Mammary epithelial cell (primary cell): ENCODE measurements at regions of chr1 and their contacts with region 1.

Region 1: DNA sequence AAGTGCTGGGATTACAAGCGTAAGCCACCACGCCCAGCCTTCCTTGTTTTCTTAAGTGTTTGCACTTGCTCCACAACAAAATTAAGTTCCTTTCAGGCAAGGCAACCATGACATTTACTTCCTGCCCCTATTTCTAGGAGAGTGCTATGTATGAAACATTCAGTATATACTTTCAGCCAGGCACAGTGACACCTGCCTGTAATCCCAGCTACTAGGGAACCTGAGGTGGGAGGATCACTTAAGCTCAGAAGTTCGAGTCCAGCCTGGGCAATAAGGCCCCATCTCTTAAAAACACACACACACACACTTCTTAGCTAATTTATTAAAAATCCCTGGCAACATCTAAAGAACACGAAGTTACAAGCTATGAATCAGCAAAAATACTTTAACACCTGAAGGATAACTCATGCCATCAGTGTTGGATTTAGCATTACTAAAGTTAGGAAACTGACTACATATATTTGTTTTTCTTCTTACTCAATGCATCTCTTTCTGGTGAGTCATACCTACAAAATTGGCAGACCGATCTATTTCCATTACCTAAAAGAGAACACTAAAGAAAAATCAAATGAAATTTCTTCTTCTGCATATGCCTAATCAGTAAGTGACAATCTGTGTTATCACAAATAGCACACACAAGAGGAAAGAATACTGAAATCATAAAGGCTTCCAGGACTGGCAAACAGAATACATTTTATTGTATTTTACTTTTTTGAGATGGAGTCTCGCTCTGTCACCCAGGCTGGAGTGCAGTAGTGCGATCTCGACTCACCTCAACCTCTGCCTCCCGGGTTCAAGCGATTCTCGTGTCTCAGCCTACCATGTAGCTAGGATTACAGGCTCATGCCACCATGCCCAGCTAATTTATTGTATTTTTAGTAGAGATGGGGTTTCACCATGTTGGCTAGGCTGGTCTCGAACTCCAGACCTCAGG is 41.5 kb downstream of the RNF115 start:
- DNase-seq: peak; percentile 91
- H3K4me3 ChIP-seq: no peak overlapping the region
- H3K27ac ChIP-seq: peak overlapping the region; percentile 77
- H3K4me1 ChIP-seq: peaks cover 25% of the 10 kb centered on the region
- H3K27me3 ChIP-seq: no peaks in the 10 kb centered on the region
- CTCF ChIP-seq: no peak

Region 2: GRCh38 chr1:145706086-145706680 is 76.2 kb before region 1 on chr1:
- CTCF ChIA-PET with region 1: no interaction called
- dilution Hi-C with region 1: loop called (anchors 5 kb)
- in situ Hi-C with region 1: no loop called
- intact Hi-C with region 1: no loop called
- DNase-seq: peak; percentile 94
- H3K4me3 ChIP-seq: no peak overlapping the region
- H3K27ac ChIP-seq: peak overlapping the region; percentile 65
- H3K4me1 ChIP-seq: peaks cover 29% of the 10 kb centered on the region
- H3K27me3 ChIP-seq: no peaks in the 10 kb centered on the region
- CTCF ChIP-seq: no peak

Region 3: GRCh38 chr1:145823565-145824498 is 41.4 kb after region 1 on chr1 and contains the starts of genes POLR3C and RNF115:
- CTCF ChIA-PET with region 1: interaction called, 3 read pairs
- dilution Hi-C with region 1: no loop called
- in situ Hi-C with region 1: no loop called
- intact Hi-C with region 1: loop called (anchors 5 kb)
- DNase-seq: peak; percentile 90
- H3K4me3 ChIP-seq: peak within 1 kb of the TSS; percentile 82 to 95 (median 87)
- H3K27ac ChIP-seq: peak within 1 kb of the TSS; percentile 86
- H3K4me1 ChIP-seq: peaks cover 11% of the 10 kb centered on the region
- H3K27me3 ChIP-seq: no peaks in the 10 kb centered on the region
- CTCF ChIP-seq: no peak
- total RNA-seq, gene POLR3C: 36.2 to 44.3 TPM
- total RNA-seq, gene RNF115: 11.1 to 12.0 TPM

Region 4: DNA sequence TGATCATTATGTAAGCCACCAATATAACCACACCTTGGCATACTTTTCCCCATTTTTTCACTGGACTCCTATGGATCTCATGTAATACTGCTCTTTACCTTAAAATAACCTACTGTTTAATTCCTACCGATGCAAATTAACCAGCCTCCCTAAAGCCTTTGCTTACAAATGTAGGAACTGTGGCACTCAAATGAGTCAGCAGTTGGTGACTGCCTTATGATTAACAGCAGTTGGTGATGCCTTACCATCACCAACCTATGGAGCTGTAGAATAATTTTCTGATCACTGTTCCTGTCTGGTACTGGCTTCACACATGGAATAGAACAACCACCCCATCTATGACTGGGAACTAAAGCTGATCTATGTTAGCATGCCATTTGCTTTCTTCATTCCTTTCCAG is 55.2 kb after region 1 on chr1:
- CTCF ChIA-PET with region 1: no interaction called
- dilution Hi-C with region 1: no loop called
- in situ Hi-C with region 1: loop called in 1 of 2 experiments (anchors 5 kb)
- intact Hi-C with region 1: no loop called
- DNase-seq: no peak
- H3K4me3 ChIP-seq: no peak overlapping the region
- H3K27ac ChIP-seq: no peak overlapping the region
- H3K4me1 ChIP-seq: no peaks in the 10 kb centered on the region
- H3K27me3 ChIP-seq: no peaks in the 10 kb centered on the region
- CTCF ChIP-seq: no peak